ENCODE measurements at regions of chr7 and their contacts with region 1.

Region 1: GRCh38 chr7:100852048-100852872 is at the start of gene SLC12A9:
- DNase-seq: peak; percentile 93 to 95
- H3K4me3 ChIP-seq: peak within 1 kb of the TSS; percentile 74
- H3K4me3 Mint-ChIP-seq: peak within 1 kb of the TSS; percentile 79
- H3K27ac Mint-ChIP-seq: peak within 1 kb of the TSS; percentile 66
- H3K4me1 ChIP-seq: peaks cover 9% of the 10 kb centered on the region
- H3K4me1 Mint-ChIP-seq: peaks cover 15% of the 10 kb centered on the region
- H3K27me3 ChIP-seq: no peaks in the 10 kb centered on the region
- H3K27me3 Mint-ChIP-seq: no peaks in the 10 kb centered on the region
- CTCF ChIP-seq: peak; percentile 89 to 97
- total RNA-seq, gene SLC12A9: 59.0 and 60.7 TPM in 2 replicates

Region 2: GRCh38 chr7:100719523-100720319 is 132.5 kb before region 1 on chr7:
- CTCF ChIA-PET with region 1: interaction called, 10 read pairs
- POLR2A ChIA-PET with region 1: no interaction called
- intact Hi-C with region 1: no loop called
- DNase-seq: peak; percentile 31 to 71
- H3K4me3 ChIP-seq: peak overlapping the region; percentile 47
- H3K4me3 Mint-ChIP-seq: peak overlapping the region; percentile 65
- H3K27ac Mint-ChIP-seq: no peak overlapping the region
- H3K4me1 ChIP-seq: peaks cover 9% of the 10 kb centered on the region
- H3K4me1 Mint-ChIP-seq: peaks cover 7% of the 10 kb centered on the region
- H3K27me3 ChIP-seq: no peaks in the 10 kb centered on the region
- H3K27me3 Mint-ChIP-seq: no peaks in the 10 kb centered on the region
- CTCF ChIP-seq: no peak

Region 3: GRCh38 chr7:100803398-100804233 is 48.6 kb before region 1 on chr7:
- CTCF ChIA-PET with region 1: interaction called, 19 read pairs
- POLR2A ChIA-PET with region 1: interaction called, 3 read pairs
- intact Hi-C with region 1: loop called (anchors 1 kb)
- DNase-seq: peak in 1 of 2 experiments; percentile 62
- H3K4me3 ChIP-seq: no peak overlapping the region
- H3K4me3 Mint-ChIP-seq: no peak overlapping the region
- H3K27ac Mint-ChIP-seq: peak overlapping the region; percentile 70
- H3K4me1 ChIP-seq: peaks cover 47% of the 10 kb centered on the region
- H3K4me1 Mint-ChIP-seq: peaks cover 38% of the 10 kb centered on the region
- H3K27me3 ChIP-seq: no peaks in the 10 kb centered on the region
- H3K27me3 Mint-ChIP-seq: no peaks in the 10 kb centered on the region
- CTCF ChIP-seq: no peak

Region 4: GRCh38 chr7:100827330-100828227 is 24.7 kb before region 1 on chr7 and contains the start of gene EPHB4:
- CTCF ChIA-PET with region 1: interaction called, 32 read pairs
- POLR2A ChIA-PET with region 1: interaction called, 6 read pairs
- intact Hi-C with region 1: loop called (anchors 1 kb)
- DNase-seq: peak; percentile 93 to 95
- H3K4me3 ChIP-seq: peak within 1 kb of the TSS; percentile 71
- H3K4me3 Mint-ChIP-seq: peak within 1 kb of the TSS; percentile 89
- H3K27ac Mint-ChIP-seq: peak within 1 kb of the TSS; percentile 88
- H3K4me1 ChIP-seq: peaks cover 29% of the 10 kb centered on the region
- H3K4me1 Mint-ChIP-seq: peaks cover 27% of the 10 kb centered on the region
- H3K27me3 ChIP-seq: no peaks in the 10 kb centered on the region
- H3K27me3 Mint-ChIP-seq: no peaks in the 10 kb centered on the region
- CTCF ChIP-seq: peak; percentile 44 to 92
- total RNA-seq, gene EPHB4: 112 and 117 TPM in 2 replicates

Region 5: DNA sequence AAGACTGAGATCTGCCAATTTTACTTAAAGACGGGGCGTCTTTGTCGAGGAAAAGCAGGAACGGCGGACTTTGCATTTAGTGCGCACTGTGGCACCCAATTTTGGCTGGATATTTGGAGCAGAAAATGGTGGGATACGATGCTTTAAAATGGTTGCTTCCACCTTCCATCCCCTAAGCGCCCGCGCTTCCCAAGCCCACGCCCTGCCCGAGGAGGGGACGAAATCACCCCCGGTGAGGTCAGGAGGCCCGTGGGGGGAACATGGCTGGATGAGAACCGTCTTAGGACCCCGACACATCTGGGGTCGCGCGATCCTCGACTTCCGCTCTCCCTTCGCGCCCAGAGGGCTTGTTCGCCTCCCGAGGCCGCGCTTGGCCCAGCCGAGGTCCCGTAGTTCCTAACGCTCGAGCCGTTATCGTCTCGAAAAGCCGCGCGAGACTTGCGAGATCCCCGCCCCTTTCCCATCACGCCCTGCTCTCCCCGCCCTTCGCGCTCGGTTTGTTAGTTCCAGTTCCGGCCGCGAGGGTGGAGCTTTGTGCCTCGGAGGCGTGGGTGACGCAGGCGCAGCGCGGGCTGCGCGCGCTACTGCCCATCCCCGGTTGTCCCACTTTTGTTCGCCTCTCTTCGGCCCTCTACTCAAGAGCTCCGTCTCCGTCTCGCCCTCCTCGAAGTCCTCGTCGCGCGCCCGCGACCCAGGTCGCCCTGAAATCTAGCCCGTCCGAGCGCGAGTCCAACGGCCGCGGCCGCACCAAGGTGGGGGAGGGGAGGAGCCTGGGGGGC is 22.5 kb after region 1 on chr7 and contains the start of gene SRRT:
- CTCF ChIA-PET with region 1: interaction called, 11 read pairs
- POLR2A ChIA-PET with region 1: interaction called, 14 read pairs
- intact Hi-C with region 1: no loop called
- DNase-seq: peak; percentile 98 to 99
- H3K4me3 ChIP-seq: peak within 1 kb of the TSS; percentile 81
- H3K4me3 Mint-ChIP-seq: peak within 1 kb of the TSS; percentile 85
- H3K27ac Mint-ChIP-seq: peak within 1 kb of the TSS; percentile 98
- H3K4me1 ChIP-seq: peaks cover 10% of the 10 kb centered on the region; the same call in 1 of the 2 replicates
- H3K4me1 Mint-ChIP-seq: peaks cover 14% of the 10 kb centered on the region
- H3K27me3 ChIP-seq: no peaks in the 10 kb centered on the region
- H3K27me3 Mint-ChIP-seq: no peaks in the 10 kb centered on the region
- CTCF ChIP-seq: peak; percentile 33 to 48
- total RNA-seq, gene SRRT: 211 and 243 TPM in 2 replicates